CD4-positive, alpha-beta memory T cell (primary cell): ENCODE measurements at regions of chr20 and their contacts with region 1.

Region 1: GRCh38 chr20:35741892-35742740 is at the start of gene RBM39:
- DNase-seq: peak; percentile 99 to 100 (median 100)
- H3K4me3 ChIP-seq: peak within 1 kb of the TSS; percentile 78 to 99
- H3K4me3 Mint-ChIP-seq: peak within 1 kb of the TSS; percentile 98 to 100 (median 99)
- H3K27ac ChIP-seq: peak within 1 kb of the TSS; percentile 100
- H3K27ac Mint-ChIP-seq: peak within 1 kb of the TSS; percentile 98 to 100 (median 100)
- H3K4me1 ChIP-seq: peaks cover 58% of the 10 kb centered on the region
- H3K4me1 Mint-ChIP-seq: peaks cover 29 to 60% (median 40%) of the 10 kb centered on the region in 4 donors
- H3K27me3 ChIP-seq: no peaks in the 10 kb centered on the region
- H3K27me3 Mint-ChIP-seq: peaks cover 0 to 3% of the 10 kb centered on the region in 2 donors
- total RNA-seq, gene RBM39: 631 to 665 TPM

Region 2: GRCh38 chr20:34825530-34826362 is 916.4 kb before region 1 on chr20 and contains the start of gene NCOA6:
- CTCF ChIA-PET with region 1: no interaction called
- POLR2A ChIA-PET with region 1: no interaction called
- intact Hi-C with region 1: no loop called
- DNase-seq: peak; percentile 73 to 79 (median 74)
- H3K4me3 ChIP-seq: peak within 1 kb of the TSS; percentile 80 to 91
- H3K4me3 Mint-ChIP-seq: peak within 1 kb of the TSS; percentile 93 to 98 (median 97)
- H3K27ac ChIP-seq: peak within 1 kb of the TSS; percentile 78
- H3K27ac Mint-ChIP-seq: peak within 1 kb of the TSS; percentile 93 to 99 (median 95)
- H3K4me1 ChIP-seq: peaks cover 34% of the 10 kb centered on the region
- H3K4me1 Mint-ChIP-seq: peaks cover 23 to 48% (median 39%) of the 10 kb centered on the region in 4 donors
- H3K27me3 ChIP-seq: no peaks in the 10 kb centered on the region
- H3K27me3 Mint-ChIP-seq: peaks cover 0 to 1% of the 10 kb centered on the region in 2 donors
- total RNA-seq, gene NCOA6: 29.5 to 29.9 TPM

Region 3: DNA sequence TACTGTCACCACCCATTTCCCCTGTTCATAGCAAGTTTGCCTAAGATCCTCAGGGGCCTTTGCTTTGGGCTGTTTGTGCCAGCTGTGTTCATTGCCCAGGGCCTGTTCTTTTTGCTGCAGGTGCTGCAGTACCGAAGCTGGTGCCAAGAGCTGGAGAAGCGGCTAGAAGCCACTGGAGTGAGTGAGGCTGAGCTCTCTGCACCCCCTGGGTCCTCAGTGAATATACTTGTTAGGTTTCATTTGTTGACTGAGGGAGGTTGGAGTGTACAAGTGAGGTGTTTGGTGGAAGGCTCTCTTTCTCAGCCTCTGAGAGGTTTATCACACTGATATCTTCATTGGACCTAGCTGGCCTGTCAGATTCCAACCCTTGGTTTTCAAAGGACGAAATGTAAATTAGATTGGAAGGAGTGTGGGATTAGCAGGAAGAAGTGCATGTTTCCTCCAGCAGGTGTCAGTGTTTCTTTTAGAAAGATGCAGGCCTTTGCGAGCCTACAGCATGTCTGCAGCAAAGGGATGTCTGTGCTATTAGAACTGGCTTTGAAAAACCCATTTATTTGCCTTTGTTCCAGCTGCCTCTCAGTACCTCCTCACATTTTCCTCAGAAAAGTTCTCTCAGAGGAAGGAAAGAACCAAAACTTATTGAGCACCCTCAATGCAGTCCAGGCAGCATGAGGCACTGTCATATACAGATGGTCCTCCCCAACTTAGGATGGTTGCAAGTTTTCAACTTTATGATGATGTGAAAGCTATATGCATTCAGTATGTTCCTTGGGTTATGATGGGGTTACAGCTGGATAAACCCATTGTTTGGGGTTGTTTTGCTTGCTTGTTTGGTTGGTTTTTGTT is 278.4 kb before region 1 on chr20:
- CTCF ChIA-PET with region 1: interaction called, 5 read pairs
- POLR2A ChIA-PET with region 1: interaction called, 10 read pairs
- intact Hi-C with region 1: no loop called
- DNase-seq: peak; percentile 59 to 67 (median 64)
- H3K4me3 ChIP-seq: no peak overlapping the region
- H3K4me3 Mint-ChIP-seq: peak overlapping the region in 1 of 8 donors; percentile 15
- H3K27ac ChIP-seq: no peak overlapping the region
- H3K27ac Mint-ChIP-seq: peak overlapping the region in 2 of 7 donors; percentile 21 to 71
- H3K4me1 ChIP-seq: peaks cover 8% of the 10 kb centered on the region
- H3K4me1 Mint-ChIP-seq: peaks cover 4 to 8% (median 7%) of the 10 kb centered on the region in 4 donors
- H3K27me3 ChIP-seq: no peaks in the 10 kb centered on the region
- H3K27me3 Mint-ChIP-seq: no peaks in the 10 kb centered on the region

Region 4: GRCh38 chr20:35619196-35620095 is 122.7 kb before region 1 on chr20:
- CTCF ChIA-PET with region 1: interaction called, 3 read pairs
- POLR2A ChIA-PET with region 1: interaction called, 35 read pairs
- intact Hi-C with region 1: loop called (anchors 1 kb)
- DNase-seq: peak; percentile 71 to 81 (median 76)
- H3K4me3 ChIP-seq: peak overlapping the region; percentile 36 to 75
- H3K4me3 Mint-ChIP-seq: peak overlapping the region; percentile 84 to 97 (median 90)
- H3K27ac ChIP-seq: peak overlapping the region; percentile 40
- H3K27ac Mint-ChIP-seq: peak overlapping the region; percentile 83 to 99 (median 89)
- H3K4me1 ChIP-seq: peaks cover 39% of the 10 kb centered on the region
- H3K4me1 Mint-ChIP-seq: peaks cover 17 to 47% (median 33%) of the 10 kb centered on the region in 4 donors
- H3K27me3 ChIP-seq: no peaks in the 10 kb centered on the region
- H3K27me3 Mint-ChIP-seq: peaks cover 0 to 3% of the 10 kb centered on the region in 2 donors

Region 5: DNA sequence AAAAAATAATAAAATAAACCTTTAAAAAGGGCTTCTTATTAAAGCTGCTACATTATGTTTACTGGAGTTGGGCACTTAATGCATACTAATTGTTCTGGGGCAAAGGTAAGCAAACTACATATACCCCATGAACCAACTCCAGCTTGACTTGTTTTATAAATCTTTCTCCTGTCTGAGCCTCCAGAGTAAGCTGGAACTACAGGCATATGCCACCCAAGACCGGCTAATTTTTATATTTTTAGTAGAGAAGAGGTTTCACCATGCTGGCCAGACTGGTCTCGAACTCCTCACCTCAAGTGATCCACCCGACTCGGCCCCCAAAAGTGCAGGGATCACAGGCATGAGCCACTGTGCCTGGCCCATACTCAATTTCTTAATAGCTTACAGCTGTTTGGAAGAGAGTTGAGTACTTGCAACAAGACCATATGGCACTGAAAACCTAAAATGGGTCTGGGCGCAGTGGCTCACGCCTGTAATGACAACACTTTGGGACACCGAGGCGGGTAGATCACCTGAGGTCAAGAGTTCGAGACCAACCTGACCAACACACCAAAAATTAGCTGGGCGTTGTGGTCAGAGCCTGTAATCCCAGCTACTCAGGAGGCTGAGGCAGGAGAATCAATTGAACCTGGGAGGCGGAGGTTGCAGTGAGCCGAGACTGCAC is 23.0 kb before region 1 on chr20:
- CTCF ChIA-PET with region 1: interaction called, 6 read pairs
- POLR2A ChIA-PET with region 1: interaction called, 15 read pairs
- intact Hi-C with region 1: no loop called
- DNase-seq: no peak
- H3K4me3 ChIP-seq: no peak overlapping the region
- H3K4me3 Mint-ChIP-seq: peak overlapping the region in 1 of 8 donors; percentile 17
- H3K27ac ChIP-seq: no peak overlapping the region
- H3K27ac Mint-ChIP-seq: peak overlapping the region in 5 of 7 donors; percentile 24 to 73 (median 46)
- H3K4me1 ChIP-seq: peaks cover 64% of the 10 kb centered on the region
- H3K4me1 Mint-ChIP-seq: peaks cover 31 to 64% (median 46%) of the 10 kb centered on the region in 4 donors
- H3K27me3 ChIP-seq: no peaks in the 10 kb centered on the region
- H3K27me3 Mint-ChIP-seq: no peaks in the 10 kb centered on the region

Region 6: DNA sequence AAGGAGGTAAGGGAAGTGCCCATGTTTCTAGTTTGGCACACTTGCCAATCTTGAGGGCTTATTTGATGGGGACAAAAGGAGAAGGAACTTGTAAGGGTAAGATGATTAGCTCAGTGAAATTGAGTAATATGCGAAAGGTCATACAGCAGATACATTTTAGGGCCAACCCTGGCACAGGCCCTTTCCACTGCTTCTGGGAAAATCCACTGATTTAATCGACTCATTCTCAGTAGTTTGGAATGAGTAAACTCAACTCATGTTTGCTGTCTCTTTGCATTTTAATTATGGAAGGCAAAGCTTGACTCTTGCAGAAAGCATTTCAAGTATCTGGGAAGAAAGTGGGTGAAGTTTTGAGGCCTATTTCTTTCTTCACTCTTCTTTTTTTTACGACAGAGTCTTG is 49.7 kb after region 1 on chr20:
- CTCF ChIA-PET with region 1: no interaction called
- POLR2A ChIA-PET with region 1: interaction called, 17 read pairs
- intact Hi-C with region 1: no loop called
- DNase-seq: no peak
- H3K4me3 ChIP-seq: no peak overlapping the region
- H3K4me3 Mint-ChIP-seq: peak overlapping the region in 2 of 8 donors; percentile 6 to 11
- H3K27ac ChIP-seq: no peak overlapping the region
- H3K27ac Mint-ChIP-seq: peak overlapping the region in 6 of 7 donors; percentile 13 to 64 (median 59)
- H3K4me1 ChIP-seq: peaks cover 22% of the 10 kb centered on the region
- H3K4me1 Mint-ChIP-seq: peaks cover 18 to 50% (median 28%) of the 10 kb centered on the region in 4 donors
- H3K27me3 ChIP-seq: no peaks in the 10 kb centered on the region
- H3K27me3 Mint-ChIP-seq: no peaks in the 10 kb centered on the region

Region 7: GRCh38 chr20:35883778-35884540 is 141.8 kb after region 1 on chr20:
- CTCF ChIA-PET with region 1: interaction called, 11 read pairs
- POLR2A ChIA-PET with region 1: interaction called, 11 read pairs
- intact Hi-C with region 1: loop called (anchors 2 kb)
- DNase-seq: peak; percentile 52 to 59 (median 56)
- H3K4me3 ChIP-seq: no peak overlapping the region
- H3K4me3 Mint-ChIP-seq: no peak overlapping the region
- H3K27ac ChIP-seq: no peak overlapping the region
- H3K27ac Mint-ChIP-seq: peak overlapping the region in 5 of 7 donors; percentile 2 to 74 (median 42)
- H3K4me1 ChIP-seq: peaks cover 6% of the 10 kb centered on the region
- H3K4me1 Mint-ChIP-seq: peaks cover 7 to 16% (median 11%) of the 10 kb centered on the region in 4 donors
- H3K27me3 ChIP-seq: no peaks in the 10 kb centered on the region
- H3K27me3 Mint-ChIP-seq: no peaks in the 10 kb centered on the region